Esophagus squamous epithelium (tissue), 5 donors: ENCODE measurements at regions of chr1 and their contacts with region 1.

Region 1: DNA sequence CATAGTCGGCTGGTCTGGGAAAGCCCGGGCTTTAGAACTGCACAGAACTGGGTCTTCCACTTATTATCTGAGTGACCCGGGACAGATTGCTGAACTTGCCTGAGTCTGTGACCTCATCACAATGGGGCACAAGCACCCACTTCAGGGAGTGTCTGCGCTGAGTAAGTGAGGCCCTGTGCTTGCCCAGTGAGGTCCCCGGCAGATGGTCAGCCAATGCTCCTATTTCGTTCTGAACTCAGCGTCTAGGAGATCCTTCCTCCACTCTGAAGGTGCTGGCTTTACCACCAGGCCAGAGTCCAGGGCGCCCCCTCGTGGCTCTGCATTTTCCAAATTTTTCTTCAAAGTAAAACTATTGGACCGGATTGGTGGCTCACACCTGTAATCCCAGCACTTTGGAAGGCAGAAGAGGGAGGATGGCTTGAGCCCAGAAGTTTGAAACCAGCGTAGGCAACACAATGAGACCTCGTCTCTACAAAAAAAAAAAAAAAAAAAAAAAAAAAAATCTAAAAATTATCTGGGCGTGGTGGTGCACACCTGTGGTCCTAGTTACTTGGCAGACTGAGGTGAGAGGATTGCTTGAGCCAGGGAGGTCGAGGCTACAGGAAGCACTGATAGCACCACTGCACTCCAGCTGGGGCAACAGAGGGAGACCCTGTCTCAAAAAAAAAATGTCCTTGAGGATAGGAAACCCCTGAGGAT is 61.7 kb downstream of the FCRL5 start:
- DNase-seq: no peak
- H3K4me3 ChIP-seq: no peak overlapping the region
- H3K27ac ChIP-seq: no peak overlapping the region
- H3K4me1 ChIP-seq: no peaks in the 10 kb centered on the region
- H3K27me3 ChIP-seq: peaks cover 0 to 23% (median 0%) of the 10 kb centered on the region in 4 donors
- CTCF ChIP-seq: peak in 5 of 6 experiments; percentile 32 to 61 (median 40)
- POLR2A ChIP-seq: no peak

Region 2: GRCh38 chr1:157193702-157194391 is 296.8 kb before region 1 on chr1:
- intact Hi-C with region 1: loop called (anchors 10 kb)
- DNase-seq: no peak
- H3K4me3 ChIP-seq: no peak overlapping the region
- H3K27ac ChIP-seq: no peak overlapping the region
- H3K4me1 ChIP-seq: no peaks in the 10 kb centered on the region
- H3K27me3 ChIP-seq: peaks cover 0 to 57% (median 0%) of the 10 kb centered on the region in 4 donors
- CTCF ChIP-seq: peak; percentile 13 to 54 (median 44)
- POLR2A ChIP-seq: no peak

Region 3: GRCh38 chr1:157369808-157370521 is 120.7 kb before region 1 on chr1:
- intact Hi-C with region 1: loop called (anchors 5 kb)
- DNase-seq: no peak
- H3K4me3 ChIP-seq: no peak overlapping the region
- H3K27ac ChIP-seq: no peak overlapping the region
- H3K4me1 ChIP-seq: no peaks in the 10 kb centered on the region
- H3K27me3 ChIP-seq: peaks cover 0 to 4% (median 0%) of the 10 kb centered on the region in 4 donors
- CTCF ChIP-seq: peak; percentile 68 to 92 (median 75)
- POLR2A ChIP-seq: no peak